ENCODE measurements at regions of chr5 and their contacts with region 1.

Region 1: GRCh38 chr5:30069441-30070263 is 1123.8 kb upstream of the CDH6 start:
- DNase-seq: no peak

Region 2: GRCh38 chr5:30092548-30092947 is 22.9 kb after region 1 on chr5:
- intact Hi-C with region 1: loop called in 1 of 2 experiments (anchors 1 kb)
- DNase-seq: no peak

Measured in posterior vena cava (tissue), 2 donors.